ENCODE measurements at regions of chr14 and their contacts with region 1.

Region 1: GRCh38 chr14:26841920-26842741 is 244.3 kb upstream of the NOVA1 start:
- DNase-seq: peak; percentile 47 to 65
- H3K4me3 ChIP-seq: no peak overlapping the region
- H3K4me3 Mint-ChIP-seq: peak overlapping the region; percentile 8
- H3K27ac Mint-ChIP-seq: peak overlapping the region; percentile 86
- H3K4me1 ChIP-seq: peaks cover 44% of the 10 kb centered on the region
- H3K4me1 Mint-ChIP-seq: peaks cover 39% of the 10 kb centered on the region
- H3K27me3 ChIP-seq: no peaks in the 10 kb centered on the region
- H3K27me3 Mint-ChIP-seq: no peaks in the 10 kb centered on the region
- CTCF ChIP-seq: no peak

Region 2: GRCh38 chr14:26577711-26578110 is 264.4 kb before region 1 on chr14:
- CTCF ChIA-PET with region 1: no interaction called
- POLR2A ChIA-PET with region 1: no interaction called
- intact Hi-C with region 1: no loop called
- DNase-seq: no peak
- H3K4me3 ChIP-seq: no peak overlapping the region
- H3K4me3 Mint-ChIP-seq: no peak overlapping the region
- H3K27ac Mint-ChIP-seq: no peak overlapping the region
- H3K4me1 ChIP-seq: no peaks in the 10 kb centered on the region
- H3K4me1 Mint-ChIP-seq: peaks cover 4% of the 10 kb centered on the region
- H3K27me3 ChIP-seq: no peaks in the 10 kb centered on the region
- H3K27me3 Mint-ChIP-seq: no peaks in the 10 kb centered on the region
- CTCF ChIP-seq: no peak

Region 3: DNA sequence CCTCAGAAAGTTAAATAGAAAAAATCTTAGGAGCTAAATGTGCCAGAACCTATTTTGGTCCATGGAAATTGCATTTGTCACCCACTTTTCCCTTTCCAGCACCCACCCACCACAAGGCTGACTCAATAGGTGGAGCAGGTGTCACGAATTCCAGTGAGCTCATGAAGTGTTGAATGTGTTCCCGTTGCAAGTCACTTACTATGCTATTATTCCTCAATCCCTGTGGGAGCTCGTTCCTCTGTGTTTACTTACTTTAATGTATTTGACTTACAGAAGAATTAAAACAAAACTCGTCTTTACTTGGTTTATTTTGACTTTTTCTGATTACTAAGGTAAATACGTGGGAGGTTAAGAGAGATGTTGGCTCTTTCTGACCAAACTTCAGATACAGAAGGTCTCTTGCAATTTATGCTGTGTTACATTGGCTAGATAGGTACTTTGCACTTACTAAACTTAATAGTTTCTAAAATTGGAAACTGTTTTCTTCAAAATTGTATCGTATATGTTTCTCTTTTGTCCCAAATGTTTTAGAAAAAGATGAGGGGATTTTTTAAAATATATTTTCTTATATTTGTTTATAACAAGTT is 25.1 kb after region 1 on chr14:
- CTCF ChIA-PET with region 1: no interaction called
- POLR2A ChIA-PET with region 1: no interaction called
- intact Hi-C with region 1: loop called (anchors 1 kb)
- DNase-seq: peak in 1 of 2 experiments; percentile 26
- H3K4me3 ChIP-seq: no peak overlapping the region
- H3K4me3 Mint-ChIP-seq: no peak overlapping the region
- H3K27ac Mint-ChIP-seq: no peak overlapping the region
- H3K4me1 ChIP-seq: no peaks in the 10 kb centered on the region
- H3K4me1 Mint-ChIP-seq: no peaks in the 10 kb centered on the region
- H3K27me3 ChIP-seq: no peaks in the 10 kb centered on the region
- H3K27me3 Mint-ChIP-seq: no peaks in the 10 kb centered on the region
- CTCF ChIP-seq: no peak

Measured in Caco-2 (cell line).